Posterior cingulate gyrus (tissue), 11 donors: ENCODE measurements at regions of chr14 and their contacts with region 1.

Region 1: GRCh38 chr14:88385345-88386101 is at the start of gene SPATA7:
- DNase-seq: peak; percentile 95 to 99 (median 97)

Region 2: DNA sequence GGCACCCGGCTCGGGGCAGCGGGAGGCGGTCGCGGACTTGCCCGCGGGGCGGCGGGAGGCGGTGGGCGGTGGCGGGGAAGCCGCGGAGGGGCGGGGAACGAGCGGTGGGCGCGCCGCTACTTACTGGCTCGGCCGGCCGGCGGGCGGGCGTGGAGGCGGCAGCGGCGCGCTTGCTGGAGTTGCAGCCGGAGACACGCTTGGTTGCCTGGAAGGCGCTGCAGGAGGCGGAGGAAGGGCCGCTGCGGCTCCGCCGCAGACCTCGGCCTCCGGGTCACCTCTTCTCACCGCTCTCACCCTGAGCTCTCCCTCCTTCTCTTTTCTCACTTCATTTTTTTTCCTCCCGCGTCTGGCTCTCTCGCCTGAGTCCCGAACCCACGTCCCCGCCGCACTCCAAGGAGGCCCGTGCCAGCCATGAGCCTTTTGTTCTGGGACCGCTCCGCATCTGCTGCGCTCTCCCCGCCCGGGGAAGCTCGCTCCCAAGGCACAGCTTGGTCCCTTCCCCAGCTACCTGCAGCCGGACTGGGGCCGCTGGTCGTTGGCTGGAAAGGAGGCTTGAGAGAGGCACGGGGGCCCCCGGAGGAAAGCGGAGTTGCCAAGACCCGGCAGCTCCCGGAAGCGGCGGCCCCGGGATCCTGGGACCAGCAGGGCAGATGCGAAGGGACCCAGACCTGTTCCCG is 61.9 kb before region 1 on chr14:
- intact Hi-C with region 1: loop called (anchors 10 kb)
- DNase-seq: peak in 9 of 10 donors; percentile 31 to 93 (median 56)

Region 3: DNA sequence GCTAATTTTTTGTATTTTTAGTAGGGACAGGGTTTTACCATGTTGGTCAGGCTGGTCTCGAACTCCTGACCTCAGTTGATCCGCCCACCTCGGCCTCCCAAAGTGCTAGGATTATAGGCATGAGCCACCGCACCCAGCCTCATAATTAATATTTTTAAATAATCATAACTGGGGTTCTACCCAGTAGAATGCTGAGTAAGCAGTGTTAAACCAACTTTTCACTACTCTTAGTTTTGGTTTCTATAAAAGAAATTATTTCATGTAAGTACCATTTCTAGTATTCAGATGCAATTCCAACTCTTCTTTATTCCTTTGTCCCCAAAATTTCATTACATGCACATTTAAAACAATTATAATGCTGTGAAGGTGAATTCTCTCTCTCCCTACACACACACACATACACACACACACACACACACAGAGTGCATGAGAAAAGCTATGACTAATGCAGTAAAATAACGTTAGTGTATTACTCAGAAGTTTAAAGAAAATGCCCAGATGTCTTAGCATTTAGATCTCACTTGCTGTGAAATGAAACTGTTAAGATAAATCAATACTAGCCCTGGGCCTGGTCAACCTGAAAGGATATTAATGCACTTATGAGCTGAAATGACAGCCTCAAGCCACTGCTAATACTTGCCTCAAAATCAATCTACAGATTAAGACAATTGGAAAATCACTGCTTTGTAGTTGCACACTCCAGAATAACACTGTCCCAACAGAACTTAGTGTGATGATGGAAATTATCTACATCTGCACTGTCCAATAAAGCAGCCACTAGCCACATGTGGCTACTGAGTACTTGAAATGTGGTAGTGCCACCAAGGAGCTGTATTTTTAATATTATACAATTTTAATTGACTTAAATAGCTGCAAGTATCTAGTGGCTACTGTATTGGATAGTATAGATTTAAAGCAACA is 133.3 kb after region 1 on chr14:
- intact Hi-C with region 1: no loop called
- DNase-seq: no peak